ENCODE measurements at regions of chr12 and their contacts with region 1.

Region 1: GRCh38 chr12:105420659-105421240 is 90.3 kb downstream of the C12orf75 start:
- DNase-seq: peak; percentile 79 to 87
- ATAC-seq: peak; percentile 89
- H3K4me3 ChIP-seq: no peak overlapping the region
- H3K27ac ChIP-seq: no peak overlapping the region
- H3K4me1 ChIP-seq: peaks cover 0 to 2% of the 10 kb centered on the region in 2 donors
- H3K27me3 ChIP-seq: no peaks in the 10 kb centered on the region

Region 2: DNA sequence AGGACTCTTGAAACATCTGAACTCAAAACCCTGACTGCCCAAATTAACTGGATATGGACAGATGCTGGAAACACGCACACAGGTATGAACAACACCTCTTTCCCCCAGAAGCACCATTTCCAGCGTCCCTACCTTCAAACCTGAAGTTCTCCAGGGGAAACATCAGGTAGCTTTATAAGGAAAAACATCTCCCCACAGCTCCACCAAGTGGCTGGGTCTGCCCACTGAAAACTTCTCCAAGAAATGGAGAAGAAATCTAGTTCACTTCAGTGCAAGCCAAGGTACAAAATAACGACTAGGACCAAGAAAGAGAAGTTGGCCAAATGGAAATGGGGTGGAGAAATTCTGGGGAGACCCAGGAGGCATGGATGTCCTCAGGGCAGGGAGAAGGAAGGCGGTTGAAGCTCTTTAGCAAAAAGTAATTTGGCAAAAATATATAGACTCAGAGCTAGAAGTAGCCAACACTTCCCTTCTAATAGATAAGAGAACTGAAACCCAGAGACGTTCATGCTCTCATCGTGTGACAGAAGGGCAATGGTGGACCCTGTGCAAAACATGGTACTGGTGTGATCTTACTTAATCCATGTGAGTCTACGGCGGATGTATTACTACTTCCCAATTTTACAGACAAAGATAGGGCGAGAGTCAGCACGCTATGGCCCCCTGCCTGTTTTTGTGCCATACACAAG is 728.5 kb after region 1 on chr12:
- intact Hi-C with region 1: loop called in 1 of 2 experiments (anchors 5 kb)
- DNase-seq: no peak
- ATAC-seq: no peak
- H3K4me3 ChIP-seq: no peak overlapping the region
- H3K27ac ChIP-seq: peak overlapping the region in 1 of 2 donors; percentile 11
- H3K4me1 ChIP-seq: peaks cover 0 to 4% of the 10 kb centered on the region in 2 donors
- H3K27me3 ChIP-seq: no peaks in the 10 kb centered on the region

Region 3: DNA sequence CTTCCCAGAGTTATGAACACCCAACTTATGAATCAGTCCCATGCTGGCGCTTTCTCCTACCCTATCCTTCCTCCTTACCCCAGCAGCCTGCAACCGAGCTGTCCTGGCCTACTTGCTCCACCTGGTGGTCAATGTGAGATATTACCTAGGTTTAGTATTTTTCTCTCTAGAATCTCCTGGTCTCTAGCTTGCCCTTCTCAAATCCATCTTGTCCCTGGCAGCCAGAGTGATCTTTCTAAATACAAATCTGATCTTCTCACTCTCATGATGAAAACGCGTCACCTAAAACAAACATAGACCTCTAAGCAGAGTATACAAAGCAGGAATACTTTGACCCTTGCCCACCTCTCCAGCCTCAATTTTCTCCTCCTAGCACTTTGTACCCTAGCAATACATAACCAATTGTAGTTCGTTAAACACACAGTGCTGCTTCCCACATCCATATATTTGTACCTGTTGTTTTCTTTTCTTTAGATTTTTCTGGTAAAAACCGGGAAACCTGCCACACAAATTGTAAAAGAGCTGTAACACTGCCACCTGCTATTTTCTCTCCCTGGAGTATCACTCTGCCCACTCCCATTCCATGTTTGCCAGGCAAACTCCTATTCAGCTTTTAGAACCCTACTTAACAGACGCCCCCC is 861.8 kb after region 1 on chr12:
- intact Hi-C with region 1: loop called in 1 of 2 experiments (anchors 10 kb)
- DNase-seq: peak in 1 of 2 donors; percentile 53
- ATAC-seq: peak; percentile 80
- H3K4me3 ChIP-seq: no peak overlapping the region
- H3K27ac ChIP-seq: no peak overlapping the region
- H3K4me1 ChIP-seq: no peaks in the 10 kb centered on the region
- H3K27me3 ChIP-seq: peaks cover 0 to 5% of the 10 kb centered on the region in 2 donors